Calu3 (cell line): ENCODE measurements at regions of chr4 and their contacts with region 1.

Region 1: GRCh38 chr4:77600521-77601451 is 4.8 kb upstream of the CXCL13 start:
- DNase-seq: peak; percentile 38
- H3K4me3 Mint-ChIP-seq: no peak overlapping the region
- H3K27ac Mint-ChIP-seq: no peak overlapping the region
- H3K4me1 Mint-ChIP-seq: peaks cover 8% of the 10 kb centered on the region
- H3K27me3 Mint-ChIP-seq: no peaks in the 10 kb centered on the region
- CTCF ChIP-seq: peak; percentile 71

Region 2: GRCh38 chr4:77263247-77263646 is 337.5 kb before region 1 on chr4:
- CTCF ChIA-PET with region 1: no interaction called
- intact Hi-C with region 1: no loop called
- DNase-seq: no peak
- H3K4me3 Mint-ChIP-seq: no peak overlapping the region
- H3K27ac Mint-ChIP-seq: no peak overlapping the region
- H3K4me1 Mint-ChIP-seq: no peaks in the 10 kb centered on the region
- H3K27me3 Mint-ChIP-seq: peaks cover 41% of the 10 kb centered on the region
- CTCF ChIP-seq: no peak

Region 3: GRCh38 chr4:77385124-77385969 is 215.4 kb before region 1 on chr4:
- CTCF ChIA-PET with region 1: no interaction called
- intact Hi-C with region 1: loop called (anchors 2 kb)
- DNase-seq: peak; percentile 51
- H3K4me3 Mint-ChIP-seq: no peak overlapping the region
- H3K27ac Mint-ChIP-seq: no peak overlapping the region
- H3K4me1 Mint-ChIP-seq: no peaks in the 10 kb centered on the region
- H3K27me3 Mint-ChIP-seq: peaks cover 41% of the 10 kb centered on the region
- CTCF ChIP-seq: peak; percentile 60

Region 4: DNA sequence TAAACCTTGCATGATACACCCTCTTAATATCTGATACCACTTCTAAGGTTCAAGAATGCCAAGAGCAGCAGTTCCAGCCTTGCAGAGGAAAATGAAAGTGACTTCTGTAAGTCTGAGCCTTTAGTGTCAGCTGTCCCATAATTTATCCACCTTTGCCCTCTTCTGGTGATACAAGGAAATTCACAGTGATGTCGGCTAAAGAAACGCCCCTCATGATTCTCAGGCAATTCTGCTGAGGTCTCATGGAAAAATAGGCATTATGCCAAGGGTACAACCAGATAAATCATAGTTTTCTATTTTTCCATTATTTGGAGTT is 167.4 kb before region 1 on chr4:
- CTCF ChIA-PET with region 1: interaction called, 10 read pairs
- intact Hi-C with region 1: no loop called
- DNase-seq: peak; percentile 20
- H3K4me3 Mint-ChIP-seq: no peak overlapping the region
- H3K27ac Mint-ChIP-seq: no peak overlapping the region
- H3K4me1 Mint-ChIP-seq: no peaks in the 10 kb centered on the region
- H3K27me3 Mint-ChIP-seq: peaks cover 15% of the 10 kb centered on the region
- CTCF ChIP-seq: peak; percentile 17

Region 5: DNA sequence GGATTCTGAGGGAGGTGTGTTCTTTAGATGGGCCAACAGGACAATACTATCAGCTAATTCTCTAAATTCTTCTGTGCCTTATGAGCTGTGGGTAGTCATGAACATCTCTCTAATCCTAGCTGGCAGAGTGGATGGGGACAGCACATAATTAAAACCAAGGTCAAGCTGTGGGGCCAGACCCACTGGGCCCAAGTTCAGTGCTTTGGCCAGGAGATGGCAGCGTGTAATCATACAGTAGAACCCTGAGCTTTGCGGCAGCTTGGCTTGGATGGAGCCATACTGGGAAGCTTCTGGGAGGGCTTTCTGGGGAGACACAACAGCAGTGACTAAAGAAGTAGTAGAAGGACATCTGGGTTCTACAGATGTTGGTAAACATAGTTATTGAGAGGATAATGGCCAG is 135.5 kb before region 1 on chr4:
- CTCF ChIA-PET with region 1: interaction called, 17 read pairs
- intact Hi-C with region 1: loop called (anchors 2 kb)
- DNase-seq: peak; percentile 38
- H3K4me3 Mint-ChIP-seq: no peak overlapping the region
- H3K27ac Mint-ChIP-seq: no peak overlapping the region
- H3K4me1 Mint-ChIP-seq: no peaks in the 10 kb centered on the region
- H3K27me3 Mint-ChIP-seq: peaks cover 29% of the 10 kb centered on the region
- CTCF ChIP-seq: no peak

Region 6: GRCh38 chr4:77481856-77482255 is 118.9 kb before region 1 on chr4:
- CTCF ChIA-PET with region 1: no interaction called
- intact Hi-C with region 1: no loop called
- DNase-seq: no peak
- H3K4me3 Mint-ChIP-seq: no peak overlapping the region
- H3K27ac Mint-ChIP-seq: no peak overlapping the region
- H3K4me1 Mint-ChIP-seq: no peaks in the 10 kb centered on the region
- H3K27me3 Mint-ChIP-seq: peaks cover 76% of the 10 kb centered on the region
- CTCF ChIP-seq: no peak

Region 7: DNA sequence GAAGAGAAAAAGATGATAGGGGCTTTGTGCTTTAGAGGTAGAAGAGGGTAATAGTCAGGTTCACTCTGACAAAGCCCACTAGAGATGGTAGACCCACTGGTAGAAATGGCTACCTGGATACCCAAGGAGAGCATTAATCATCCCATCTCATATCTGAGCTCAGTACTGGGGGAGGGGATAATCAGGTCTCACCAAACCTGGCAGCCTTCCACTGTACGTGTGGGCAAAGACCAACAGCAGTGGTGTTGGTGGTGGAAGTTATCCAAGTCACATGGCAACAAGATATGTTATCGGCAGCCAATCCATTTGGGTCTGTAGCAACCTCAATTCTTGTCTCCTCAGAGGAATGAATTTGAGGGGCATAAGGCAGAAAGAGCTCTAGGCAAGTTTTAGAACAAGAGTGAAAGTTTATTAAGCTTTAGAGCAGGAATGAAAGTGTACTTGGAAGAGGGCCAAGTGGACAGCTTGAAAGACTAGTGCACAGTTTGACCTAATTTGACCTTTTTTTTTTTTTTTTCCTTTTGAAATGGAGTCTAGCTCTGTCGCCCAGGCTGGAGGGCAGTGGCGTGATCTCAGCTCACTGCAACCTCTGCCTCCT is 62.1 kb before region 1 on chr4:
- CTCF ChIA-PET with region 1: interaction called, 3 read pairs
- intact Hi-C with region 1: loop called (anchors 5 kb)
- DNase-seq: peak; percentile 62
- H3K4me3 Mint-ChIP-seq: peak overlapping the region; percentile 47
- H3K27ac Mint-ChIP-seq: peak overlapping the region; percentile 83
- H3K4me1 Mint-ChIP-seq: peaks cover 16% of the 10 kb centered on the region
- H3K27me3 Mint-ChIP-seq: no peaks in the 10 kb centered on the region
- CTCF ChIP-seq: no peak

Region 8: GRCh38 chr4:77652237-77652897 is 51.6 kb after region 1 on chr4:
- CTCF ChIA-PET with region 1: no interaction called
- intact Hi-C with region 1: no loop called
- DNase-seq: peak; percentile 34
- H3K4me3 Mint-ChIP-seq: no peak overlapping the region
- H3K27ac Mint-ChIP-seq: no peak overlapping the region
- H3K4me1 Mint-ChIP-seq: peaks cover 22% of the 10 kb centered on the region
- H3K27me3 Mint-ChIP-seq: no peaks in the 10 kb centered on the region
- CTCF ChIP-seq: no peak

Region 9: GRCh38 chr4:78002261-78002660 is 401.5 kb after region 1 on chr4:
- CTCF ChIA-PET with region 1: no interaction called
- intact Hi-C with region 1: no loop called
- DNase-seq: no peak
- H3K4me3 Mint-ChIP-seq: no peak overlapping the region
- H3K27ac Mint-ChIP-seq: no peak overlapping the region
- H3K4me1 Mint-ChIP-seq: no peaks in the 10 kb centered on the region
- H3K27me3 Mint-ChIP-seq: no peaks in the 10 kb centered on the region
- CTCF ChIP-seq: no peak